PC-9 (cell line): ENCODE measurements at regions of chr5 and their contacts with region 1.

Region 1: DNA sequence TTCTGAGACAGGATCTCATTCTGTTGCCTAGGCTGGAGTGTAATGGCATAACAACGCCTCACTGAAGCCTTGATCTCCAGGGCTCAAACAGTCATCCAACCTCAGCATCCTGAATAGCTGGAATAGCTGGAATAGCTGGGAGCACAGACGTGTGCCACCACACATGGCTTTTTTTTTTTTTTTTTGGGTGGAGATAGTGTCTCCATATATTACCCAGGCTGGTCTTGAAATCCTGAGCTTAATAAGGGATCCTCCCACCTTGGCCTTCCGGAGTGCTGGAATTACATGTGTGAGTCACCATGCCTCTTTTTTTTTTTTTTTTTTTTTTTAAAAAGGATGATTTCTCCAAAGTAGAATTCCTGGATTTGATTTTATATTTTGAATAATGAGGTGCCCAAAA is 60.7 kb downstream of the NSD1 start:
- DNase-seq: peak; percentile 72 to 90
- H3K4me3 ChIP-seq: no peak overlapping the region
- H3K27ac ChIP-seq: no peak overlapping the region
- H3K4me1 ChIP-seq: peaks cover 12% of the 10 kb centered on the region
- H3K27me3 ChIP-seq: no peaks in the 10 kb centered on the region
- CTCF ChIP-seq: no peak

Region 2: GRCh38 chr5:177351385-177352329 is 157.4 kb after region 1 on chr5 and contains the start of gene LMAN2:
- CTCF ChIA-PET with region 1: no interaction called
- POLR2A ChIA-PET with region 1: no interaction called
- intact Hi-C with region 1: no loop called
- DNase-seq: peak; percentile 88 to 92
- H3K4me3 ChIP-seq: peak within 1 kb of the TSS; percentile 78
- H3K27ac ChIP-seq: peak within 1 kb of the TSS; percentile 85
- H3K4me1 ChIP-seq: peaks cover 20% of the 10 kb centered on the region
- H3K27me3 ChIP-seq: no peaks in the 10 kb centered on the region
- CTCF ChIP-seq: no peak
- total RNA-seq, gene LMAN2: 129 and 153 TPM in 2 replicates

Region 3: DNA sequence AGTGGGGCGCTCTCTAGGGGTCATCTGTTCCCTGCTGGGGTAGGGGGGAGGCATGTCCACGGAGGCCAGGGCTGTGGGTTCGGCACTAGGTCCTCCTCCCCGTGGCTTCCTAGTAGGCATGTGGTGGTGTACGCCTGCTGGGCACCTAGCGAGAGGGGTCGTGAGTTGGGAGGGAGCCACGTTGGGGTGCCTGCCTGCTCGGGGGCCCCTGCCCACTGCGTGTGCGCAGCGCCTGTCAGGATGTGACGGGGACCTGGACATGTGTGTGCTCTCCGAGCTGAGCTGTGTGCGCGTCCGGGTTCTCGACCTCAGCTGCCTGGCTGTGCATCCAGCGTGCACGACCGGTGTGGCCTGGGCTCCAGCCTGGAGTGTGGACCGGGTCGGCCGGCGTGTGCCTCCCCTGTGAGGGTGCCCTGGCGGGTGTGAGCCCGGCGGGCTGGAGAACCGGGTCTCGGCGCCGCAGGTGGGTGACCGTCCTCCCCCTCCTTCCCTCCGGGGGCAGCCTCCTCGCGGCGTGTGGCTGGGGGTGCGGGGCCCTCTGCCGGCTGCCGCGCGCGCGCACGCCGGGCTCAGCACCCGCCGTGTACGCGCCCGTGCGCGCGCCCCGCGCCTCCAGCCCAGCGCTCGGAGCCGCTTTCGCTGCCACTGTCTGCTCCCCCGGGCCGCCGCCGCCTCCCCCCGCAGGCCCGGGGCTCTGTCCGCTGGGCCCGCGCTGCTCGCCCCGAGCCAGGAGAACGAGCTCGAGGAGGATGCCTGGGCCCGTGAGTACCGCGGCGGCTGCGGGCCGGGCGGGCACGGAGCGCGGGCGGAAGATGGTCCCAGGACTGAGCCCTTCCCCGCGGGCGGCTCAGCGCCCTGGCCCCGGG is 252.2 kb after region 1 on chr5 and contains the start of gene PRR7:
- CTCF ChIA-PET with region 1: interaction called, 5 read pairs
- POLR2A ChIA-PET with region 1: interaction called, 36 read pairs
- intact Hi-C with region 1: no loop called
- DNase-seq: peak in 1 of 2 experiments; percentile 73
- H3K4me3 ChIP-seq: peak within 1 kb of the TSS; percentile 68
- H3K27ac ChIP-seq: peak within 1 kb of the TSS; percentile 78
- H3K4me1 ChIP-seq: peaks cover 18% of the 10 kb centered on the region
- H3K27me3 ChIP-seq: no peaks in the 10 kb centered on the region
- CTCF ChIP-seq: no peak
- total RNA-seq, gene PRR7: 22.2 and 31.7 TPM in 2 replicates

Region 4: GRCh38 chr5:178146020-178146820 is 951.9 kb after region 1 on chr5:
- CTCF ChIA-PET with region 1: no interaction called
- POLR2A ChIA-PET with region 1: interaction called, 31 read pairs
- intact Hi-C with region 1: no loop called
- DNase-seq: peak; percentile 81 to 98
- H3K4me3 ChIP-seq: no peak overlapping the region
- H3K27ac ChIP-seq: peak overlapping the region; percentile 97
- H3K4me1 ChIP-seq: peaks cover 32% of the 10 kb centered on the region
- H3K27me3 ChIP-seq: no peaks in the 10 kb centered on the region
- CTCF ChIP-seq: peak; percentile 95